ENCODE measurements at regions of chr17 and their contacts with region 1.

Region 1: DNA sequence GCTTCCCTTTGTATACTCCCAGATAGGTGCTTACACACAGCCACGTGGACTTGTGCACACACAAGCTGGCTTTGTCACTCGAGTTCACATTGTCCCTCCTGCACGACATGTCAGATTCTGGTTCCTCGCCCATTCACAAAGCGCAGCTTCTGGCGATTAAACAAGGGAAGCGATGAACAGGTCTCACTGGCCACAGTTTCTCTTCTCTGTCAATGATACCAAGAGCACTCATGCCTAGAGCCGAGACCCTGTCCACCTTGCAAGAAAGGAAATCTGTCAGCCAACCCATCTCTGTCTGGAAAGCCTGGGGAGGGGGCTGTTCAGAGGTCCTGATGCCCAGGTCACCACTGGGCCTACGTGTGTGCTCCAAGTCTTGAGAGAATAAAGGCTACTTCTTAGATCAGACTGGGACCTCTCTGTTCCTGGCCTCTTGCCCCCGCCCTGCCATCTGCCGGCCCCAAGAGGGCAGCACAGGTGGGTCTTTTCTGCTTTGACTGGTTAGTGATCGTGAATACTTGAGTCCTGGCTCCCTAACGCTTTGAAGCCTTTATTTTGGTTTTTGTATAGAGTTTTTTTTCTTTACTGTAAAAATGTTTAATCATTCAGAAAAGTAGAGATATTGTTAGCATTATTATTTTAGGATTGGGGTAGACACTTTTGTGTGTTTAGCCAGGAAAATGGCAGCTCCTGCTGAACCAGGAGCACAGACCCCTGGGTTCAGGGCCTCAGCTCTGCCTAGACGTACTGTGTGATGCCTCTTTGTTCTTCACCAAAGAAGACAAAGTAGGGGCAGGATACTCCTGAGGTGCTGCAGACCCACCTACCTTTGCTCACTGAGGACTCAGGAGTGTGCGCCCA is 104.7 kb downstream of the MRM1 start:
- DNase-seq: peak; percentile 40
- H3K4me3 ChIP-seq: no peak overlapping the region
- H3K27ac ChIP-seq: no peak overlapping the region
- H3K4me1 ChIP-seq: no peaks in the 10 kb centered on the region
- CTCF ChIP-seq: peak; percentile 86

Region 2: GRCh38 chr17:36728030-36728991 is 22.2 kb after region 1 on chr17:
- CTCF ChIA-PET with region 1: no interaction called
- POLR2A ChIA-PET with region 1: no interaction called
- intact Hi-C with region 1: no loop called
- DNase-seq: no peak
- H3K4me3 ChIP-seq: no peak overlapping the region
- H3K27ac ChIP-seq: no peak overlapping the region
- H3K4me1 ChIP-seq: no peaks in the 10 kb centered on the region
- CTCF ChIP-seq: no peak

Region 3: DNA sequence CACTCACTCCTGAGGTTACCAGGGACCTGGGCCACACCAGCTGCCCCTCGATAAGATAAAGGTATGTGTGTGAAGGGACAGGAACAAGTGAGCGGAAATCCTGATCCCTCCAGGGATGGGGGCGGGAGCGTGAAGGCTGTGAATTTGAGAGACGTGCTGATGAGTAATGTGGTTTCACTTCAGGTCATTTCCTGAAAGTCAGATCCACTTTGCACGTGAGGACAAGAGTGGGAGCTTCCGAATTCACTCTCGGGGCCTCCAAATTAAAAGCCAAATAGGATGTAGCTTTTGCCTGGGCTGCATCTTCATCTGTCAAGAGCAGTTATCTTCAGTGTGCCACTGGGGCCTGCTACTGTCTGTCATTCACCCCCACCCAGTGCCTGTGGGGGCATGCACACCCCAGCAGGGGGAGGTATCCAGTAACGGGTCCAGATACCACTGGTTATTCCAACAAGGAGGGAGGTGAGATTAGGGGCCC is 143.8 kb after region 1 on chr17:
- CTCF ChIA-PET with region 1: no interaction called
- POLR2A ChIA-PET with region 1: no interaction called
- intact Hi-C with region 1: no loop called
- DNase-seq: peak; percentile 4
- H3K4me3 ChIP-seq: no peak overlapping the region
- H3K27ac ChIP-seq: no peak overlapping the region
- H3K4me1 ChIP-seq: no peaks in the 10 kb centered on the region
- CTCF ChIP-seq: no peak

Region 4: DNA sequence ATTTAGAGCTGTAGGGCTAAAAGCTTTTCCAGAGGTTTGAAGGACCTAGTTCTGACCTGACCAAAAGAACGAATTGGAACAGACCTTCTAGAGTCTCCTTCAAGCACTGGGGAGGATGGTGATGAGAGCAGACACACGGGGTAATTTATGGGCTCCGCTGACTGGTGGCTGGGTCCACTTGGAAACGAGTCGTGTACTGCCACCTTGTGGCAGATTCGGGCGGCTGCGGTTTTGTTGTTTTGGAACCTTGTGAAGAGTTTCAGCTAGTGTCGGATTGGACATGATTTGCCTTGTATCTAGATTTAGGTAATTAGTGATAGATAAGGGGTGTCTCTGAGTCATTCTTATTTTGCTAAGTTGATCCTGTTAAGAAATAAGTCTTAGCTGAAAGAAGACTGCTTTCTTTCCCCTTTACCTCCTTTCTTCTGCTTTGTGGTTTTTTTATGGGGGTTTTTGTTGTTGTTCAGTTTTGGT is 341.6 kb after region 1 on chr17:
- CTCF ChIA-PET with region 1: no interaction called
- POLR2A ChIA-PET with region 1: no interaction called
- intact Hi-C with region 1: loop called (anchors 5 kb)
- DNase-seq: peak; percentile 79
- H3K4me3 ChIP-seq: no peak overlapping the region
- H3K27ac ChIP-seq: no peak overlapping the region
- H3K4me1 ChIP-seq: peaks cover 10% of the 10 kb centered on the region
- CTCF ChIP-seq: peak; percentile 97

Measured in OCI-LY7 (cell line).